ENCODE measurements at regions of chr3 and their contacts with region 1.

Region 1: DNA sequence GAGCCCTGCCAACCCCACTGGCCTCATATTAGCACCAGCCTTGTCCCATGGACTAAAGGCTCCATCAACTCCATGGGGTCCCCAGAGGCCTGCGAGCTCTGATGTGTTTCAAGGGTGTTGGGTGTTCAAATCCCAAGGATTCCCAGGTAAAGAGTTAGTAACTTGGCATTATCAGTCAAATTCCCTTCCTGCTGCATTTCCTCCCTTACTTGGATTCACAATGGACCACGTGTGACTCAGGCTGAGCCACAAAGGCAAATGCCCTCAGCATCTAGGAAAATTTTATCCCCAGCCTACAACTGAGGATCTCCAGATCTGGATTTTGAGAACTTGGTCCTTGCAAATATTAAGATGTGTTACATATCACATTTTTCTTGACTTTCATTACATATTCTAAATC is 58.8 kb downstream of the GADL1 start:
- DNase-seq: no peak
- H3K4me3 ChIP-seq: no peak overlapping the region
- H3K27ac ChIP-seq: no peak overlapping the region
- H3K27me3 ChIP-seq: no peaks in the 10 kb centered on the region
- CTCF ChIP-seq: no peak

Region 2: GRCh38 chr3:30747771-30748281 is 87.8 kb before region 1 on chr3:
- CTCF ChIA-PET with region 1: no interaction called
- POLR2A ChIA-PET with region 1: no interaction called
- DNase-seq: no peak
- H3K4me3 ChIP-seq: no peak overlapping the region
- H3K27ac ChIP-seq: no peak overlapping the region
- H3K27me3 ChIP-seq: no peaks in the 10 kb centered on the region
- CTCF ChIP-seq: peak; percentile 76

Region 3: GRCh38 chr3:32249184-32249782 is 1413.6 kb after region 1 on chr3:
- CTCF ChIA-PET with region 1: no interaction called
- POLR2A ChIA-PET with region 1: interaction called, 13 read pairs
- DNase-seq: peak; percentile 42
- H3K4me3 ChIP-seq: no peak overlapping the region
- H3K27ac ChIP-seq: no peak overlapping the region
- H3K27me3 ChIP-seq: peaks cover 3% of the 10 kb centered on the region
- CTCF ChIP-seq: no peak

Measured in AG04450 (cell line).